Activated CD8-positive, alpha-beta T cell treated with anti-CD3 and anti-CD28 coated beads for 36 hours (primary cell): ENCODE measurements at regions of chr11 and their contacts with region 1.

Region 1: GRCh38 chr11:106076919-106077608 is at the start of gene KBTBD3:
- DNase-seq: peak; percentile 98
- ATAC-seq: peak; percentile 96
- H3K4me3 Mint-ChIP-seq: peak within 1 kb of the TSS; percentile 94
- H3K27ac Mint-ChIP-seq: peak within 1 kb of the TSS; percentile 97
- H3K4me1 Mint-ChIP-seq: peaks cover 44% of the 10 kb centered on the region
- H3K27me3 Mint-ChIP-seq: no peaks in the 10 kb centered on the region
- CTCF ChIP-seq: no peak
- total RNA-seq, gene KBTBD3: 10.2 to 11.2 TPM

Region 2: DNA sequence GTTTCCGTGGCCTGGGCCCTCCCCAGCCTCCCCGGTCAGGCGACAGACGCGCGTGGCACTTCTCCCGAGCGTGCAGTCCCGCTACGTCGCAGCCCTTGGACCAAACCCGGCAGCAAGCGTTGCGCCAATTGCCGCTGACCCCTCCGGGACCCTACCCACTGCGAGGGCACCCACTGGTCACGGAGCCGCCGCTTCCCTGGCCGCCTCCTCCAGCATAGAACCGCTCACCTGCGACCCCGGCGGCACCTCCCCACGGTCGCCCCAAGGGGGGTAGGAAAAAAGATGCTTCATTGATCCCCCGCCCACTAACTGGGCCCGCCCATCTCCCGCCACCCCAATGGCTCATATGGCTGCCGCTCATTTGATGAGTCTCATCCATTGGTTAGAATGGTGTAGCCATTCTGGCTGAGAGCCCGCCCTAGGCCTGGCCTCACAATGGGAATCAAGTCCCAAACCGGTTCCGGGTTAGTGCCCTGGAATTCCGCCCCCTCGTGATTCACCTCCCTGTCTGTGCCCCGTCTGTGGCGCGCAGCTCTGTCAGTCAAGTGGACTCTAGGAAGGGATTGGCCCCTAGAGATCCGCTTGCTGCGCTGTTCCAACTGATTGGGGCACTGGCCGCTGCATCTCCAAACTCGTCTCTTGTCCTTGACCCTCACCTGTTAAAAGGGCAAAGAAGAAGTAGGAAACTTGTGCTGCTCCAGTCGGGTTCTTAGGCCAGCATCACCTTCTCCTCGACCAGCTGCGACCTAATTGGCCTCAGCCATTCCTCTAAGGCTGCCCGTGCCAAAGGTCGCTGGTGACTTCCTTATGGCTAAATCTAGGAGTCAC is 54.9 kb before region 1 on chr11 and contains the start of gene MSANTD4:
- CTCF ChIA-PET with region 1: no interaction called
- POLR2A ChIA-PET with region 1: no interaction called
- intact Hi-C with region 1: loop called (anchors 2 kb)
- DNase-seq: peak; percentile 98
- ATAC-seq: peak; percentile 98
- H3K4me3 Mint-ChIP-seq: peak within 1 kb of the TSS; percentile 91
- H3K27ac Mint-ChIP-seq: peak within 1 kb of the TSS; percentile 85
- H3K4me1 Mint-ChIP-seq: peaks cover 35% of the 10 kb centered on the region
- H3K27me3 Mint-ChIP-seq: peaks cover 5% of the 10 kb centered on the region
- CTCF ChIP-seq: no peak
- total RNA-seq, gene MSANTD4: 10.3 to 11.3 TPM

Region 3: DNA sequence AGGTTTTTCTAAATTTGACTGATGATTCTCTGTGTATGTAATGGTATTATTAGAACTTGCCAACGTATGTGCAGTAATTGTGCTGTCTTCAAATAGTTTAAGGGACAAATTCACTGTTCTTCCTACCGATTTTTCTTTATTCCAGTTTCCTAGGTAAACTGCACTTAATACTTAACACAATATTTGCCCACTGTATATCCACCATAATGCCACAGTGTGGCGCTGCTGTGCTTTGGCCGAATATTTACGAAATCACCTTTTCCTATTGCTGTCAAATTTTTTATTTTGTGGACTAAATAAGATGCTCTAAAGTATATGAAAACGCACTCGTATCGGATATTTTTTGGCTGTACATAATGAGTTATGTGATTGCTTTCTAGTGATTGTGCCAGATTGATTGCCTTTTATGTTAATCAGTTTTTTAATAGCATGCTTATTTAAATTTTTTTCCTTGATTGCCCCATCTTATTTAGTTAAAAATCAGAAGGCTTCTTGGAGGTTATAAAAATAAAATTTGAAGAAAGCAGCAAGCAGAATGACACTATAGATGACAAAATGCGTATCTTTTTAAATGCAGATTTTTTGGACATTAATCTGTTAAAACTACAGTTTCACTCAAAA is 10.9 kb after region 1 on chr11:
- CTCF ChIA-PET with region 1: interaction called, 16 read pairs
- POLR2A ChIA-PET with region 1: no interaction called
- intact Hi-C with region 1: no loop called
- DNase-seq: peak; percentile 75
- ATAC-seq: peak; percentile 57
- H3K4me3 Mint-ChIP-seq: no peak overlapping the region
- H3K27ac Mint-ChIP-seq: no peak overlapping the region
- H3K4me1 Mint-ChIP-seq: peaks cover 61% of the 10 kb centered on the region
- H3K27me3 Mint-ChIP-seq: no peaks in the 10 kb centered on the region
- CTCF ChIP-seq: peak; percentile 95

Region 4: GRCh38 chr11:106101819-106102218 is 24.8 kb after region 1 on chr11:
- CTCF ChIA-PET with region 1: no interaction called
- POLR2A ChIA-PET with region 1: no interaction called
- intact Hi-C with region 1: no loop called
- DNase-seq: no peak
- ATAC-seq: no peak
- H3K4me3 Mint-ChIP-seq: no peak overlapping the region
- H3K27ac Mint-ChIP-seq: no peak overlapping the region
- H3K4me1 Mint-ChIP-seq: no peaks in the 10 kb centered on the region
- H3K27me3 Mint-ChIP-seq: no peaks in the 10 kb centered on the region
- CTCF ChIP-seq: no peak